ENCODE measurements at regions of chr2 and their contacts with region 1.

Region 1: DNA sequence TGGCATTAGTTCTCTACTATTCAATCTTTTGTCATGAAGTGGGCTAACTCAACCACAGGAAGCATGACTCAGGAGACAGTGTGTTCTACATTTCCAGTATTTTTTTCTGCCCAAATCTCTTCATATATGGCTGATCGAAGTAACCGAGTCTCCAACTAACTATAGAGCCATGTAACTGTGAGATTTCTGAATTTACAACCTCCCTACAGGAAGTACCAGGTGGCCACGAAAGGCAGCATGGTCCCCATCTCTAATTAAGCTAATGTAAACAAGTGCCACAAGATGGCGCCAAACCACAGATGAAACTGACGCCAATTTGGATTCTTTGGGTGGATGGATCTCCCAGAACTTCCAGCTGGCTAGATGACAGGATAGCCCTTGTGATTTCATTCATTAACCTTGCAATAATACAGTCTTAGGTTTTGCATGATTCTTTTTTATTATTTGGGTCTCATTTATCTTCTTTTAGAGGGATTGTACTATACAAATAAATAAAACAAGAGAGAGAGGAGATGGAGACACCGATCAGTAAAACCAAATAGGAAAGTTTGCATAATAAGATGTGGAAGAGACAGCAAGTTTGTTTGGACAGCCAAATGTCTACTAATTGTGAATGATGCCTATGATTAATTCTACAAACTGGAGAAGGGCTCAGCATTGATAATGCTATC is 18.3 kb upstream of the ARHGAP15 start:
- DNase-seq: peak; percentile 59 to 72 (median 67)
- H3K4me3 ChIP-seq: no peak overlapping the region
- H3K4me3 Mint-ChIP-seq: peak overlapping the region in 5 of 8 donors; percentile 17 to 53 (median 42)
- H3K27ac ChIP-seq: peak overlapping the region; percentile 33
- H3K27ac Mint-ChIP-seq: peak overlapping the region in 6 of 7 donors; percentile 63 to 89 (median 74)
- H3K4me1 ChIP-seq: peaks cover 20% of the 10 kb centered on the region
- H3K4me1 Mint-ChIP-seq: peaks cover 17 to 25% (median 21%) of the 10 kb centered on the region in 4 donors
- H3K27me3 ChIP-seq: no peaks in the 10 kb centered on the region
- H3K27me3 Mint-ChIP-seq: no peaks in the 10 kb centered on the region

Region 2: DNA sequence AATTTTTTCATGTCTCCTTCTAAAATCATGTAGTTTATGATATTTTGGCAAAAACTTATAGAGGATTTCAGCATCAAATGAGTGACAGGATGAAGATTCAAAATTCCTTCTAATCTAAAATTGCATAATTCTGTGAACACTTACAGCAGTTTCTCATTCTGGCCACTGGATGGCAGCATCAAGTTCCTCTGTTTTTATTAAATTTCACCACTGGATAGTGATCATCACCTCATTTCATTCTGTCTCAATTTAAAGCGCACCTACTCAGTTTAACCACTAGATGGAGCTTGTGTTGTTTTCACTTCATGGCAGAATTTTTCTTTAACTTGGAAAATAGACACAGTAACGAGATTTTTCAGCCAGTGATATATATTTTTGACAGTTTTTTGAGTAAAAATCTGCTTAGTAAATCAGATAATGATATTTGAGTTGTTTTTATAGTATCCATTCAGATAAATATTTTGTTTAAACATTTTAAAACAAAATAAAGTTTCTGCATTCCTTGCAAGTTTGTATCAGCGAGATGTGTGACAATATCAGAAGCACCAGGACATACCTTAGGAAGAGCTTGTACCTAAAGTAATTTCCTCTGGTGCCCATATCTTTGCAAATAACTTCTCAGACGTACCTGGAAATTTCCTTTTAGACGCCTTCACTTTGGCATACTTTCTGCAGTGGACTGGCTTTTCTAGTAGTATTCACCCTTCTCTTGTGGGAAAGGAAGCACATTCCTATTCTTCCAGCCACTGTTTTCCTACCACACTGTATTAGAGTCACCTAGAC is 76.4 kb before region 1 on chr2:
- CTCF ChIA-PET with region 1: interaction called, 6 read pairs
- POLR2A ChIA-PET with region 1: no interaction called
- intact Hi-C with region 1: loop called (anchors 1 kb)
- DNase-seq: peak; percentile 58 to 83 (median 77)
- H3K4me3 ChIP-seq: no peak overlapping the region
- H3K4me3 Mint-ChIP-seq: no peak overlapping the region
- H3K27ac ChIP-seq: no peak overlapping the region
- H3K27ac Mint-ChIP-seq: no peak overlapping the region
- H3K4me1 ChIP-seq: no peaks in the 10 kb centered on the region
- H3K4me1 Mint-ChIP-seq: peaks cover 0 to 4% (median under 1%) of the 10 kb centered on the region in 4 donors
- H3K27me3 ChIP-seq: no peaks in the 10 kb centered on the region
- H3K27me3 Mint-ChIP-seq: peaks cover 0 to 4% of the 10 kb centered on the region in 2 donors

Region 3: DNA sequence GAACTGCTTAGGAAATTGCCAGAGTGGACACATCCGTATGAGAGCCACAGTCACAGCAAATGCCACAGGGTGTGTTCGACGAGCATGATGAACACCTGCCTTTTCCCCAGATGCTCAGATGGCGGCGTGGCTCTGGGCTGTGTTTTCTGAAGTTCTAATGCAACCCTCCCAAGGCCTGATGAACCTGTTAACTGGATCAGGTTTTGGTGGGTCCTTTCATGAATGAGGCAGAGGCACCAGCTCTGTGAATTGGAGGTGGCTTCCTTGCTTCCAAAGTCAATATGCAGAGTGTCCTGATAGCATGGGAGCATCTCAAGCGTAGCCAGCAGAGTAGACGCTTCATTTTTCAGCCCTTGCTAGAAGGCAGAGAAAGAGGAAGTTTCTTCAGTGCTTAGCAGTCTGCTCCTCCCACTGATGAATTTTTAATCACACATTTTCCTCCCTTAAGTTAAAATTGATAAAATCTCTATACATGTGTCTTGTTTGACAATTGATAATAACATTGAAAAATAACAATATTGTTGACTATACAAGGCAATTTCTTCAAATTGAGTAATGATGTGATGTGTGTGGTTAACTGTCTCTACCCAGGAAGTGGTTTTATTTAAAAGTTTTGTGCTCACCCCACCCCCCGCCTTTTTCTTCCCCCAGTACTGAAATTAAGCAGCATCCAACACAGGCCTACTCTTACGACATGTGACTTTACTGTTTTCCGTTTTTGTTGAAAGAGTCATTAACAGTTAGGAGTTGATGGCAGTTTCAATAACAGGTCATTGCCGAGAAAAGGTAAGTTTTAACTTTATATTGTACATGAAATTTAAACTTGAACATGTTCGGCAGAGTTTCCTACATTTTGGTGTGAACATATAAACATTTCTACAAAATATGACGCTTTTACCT is 18.0 kb after region 1 on chr2 and contains the start of gene ARHGAP15:
- CTCF ChIA-PET with region 1: interaction called, 49 read pairs
- POLR2A ChIA-PET with region 1: interaction called, 63 read pairs
- intact Hi-C with region 1: loop called (anchors 1 kb)
- DNase-seq: peak; percentile 80 to 90 (median 84)
- H3K4me3 ChIP-seq: peak within 1 kb of the TSS; percentile 64 to 87
- H3K4me3 Mint-ChIP-seq: peak within 1 kb of the TSS; percentile 79 to 92 (median 89)
- H3K27ac ChIP-seq: peak within 1 kb of the TSS; percentile 70
- H3K27ac Mint-ChIP-seq: peak within 1 kb of the TSS; percentile 73 to 98 (median 96)
- H3K4me1 ChIP-seq: peaks cover 76% of the 10 kb centered on the region
- H3K4me1 Mint-ChIP-seq: peaks cover 31 to 42% (median 34%) of the 10 kb centered on the region in 4 donors
- H3K27me3 ChIP-seq: no peaks in the 10 kb centered on the region
- H3K27me3 Mint-ChIP-seq: no peaks in the 10 kb centered on the region
- total RNA-seq, gene ARHGAP15: 218 to 225 TPM

Region 4: DNA sequence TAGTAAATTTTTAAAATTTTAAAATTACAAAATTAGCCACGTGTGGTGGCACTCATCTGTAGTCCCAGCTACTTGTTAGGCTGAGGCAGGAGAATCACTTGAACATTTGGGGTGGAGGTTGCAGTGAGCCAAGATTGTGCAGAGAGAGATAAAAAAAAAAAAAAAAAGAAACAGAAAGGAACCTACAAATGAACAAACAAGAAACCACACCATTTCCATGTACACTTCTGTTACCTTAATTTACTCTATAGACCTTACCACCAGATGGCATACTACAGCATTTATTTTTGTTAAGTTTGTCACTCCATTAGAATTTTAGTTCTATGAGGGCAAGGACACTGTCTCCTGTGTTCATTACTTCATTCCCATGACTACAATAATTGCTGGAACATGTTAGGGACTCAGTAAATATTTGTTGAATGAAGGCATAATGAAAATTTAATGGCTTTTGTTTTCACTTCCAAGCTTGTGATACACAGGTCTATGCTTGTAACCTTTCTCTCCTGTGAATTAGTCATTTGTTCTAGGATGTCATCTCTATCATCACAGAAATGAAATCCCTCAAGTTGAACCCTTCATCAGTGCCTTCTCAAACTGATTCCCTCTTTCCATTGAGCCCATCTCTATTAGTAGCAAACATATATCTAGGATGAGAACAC is 94.3 kb after region 1 on chr2:
- CTCF ChIA-PET with region 1: interaction called, 6 read pairs
- POLR2A ChIA-PET with region 1: interaction called, 4 read pairs
- intact Hi-C with region 1: loop called (anchors 5 kb)
- DNase-seq: peak in 4 of 5 donors; percentile 54 to 60 (median 57)
- H3K4me3 ChIP-seq: no peak overlapping the region
- H3K4me3 Mint-ChIP-seq: peak overlapping the region in 4 of 8 donors; percentile 16 to 64 (median 34)
- H3K27ac ChIP-seq: no peak overlapping the region
- H3K27ac Mint-ChIP-seq: peak overlapping the region in 5 of 7 donors; percentile 39 to 77 (median 67)
- H3K4me1 ChIP-seq: peaks cover 42% of the 10 kb centered on the region
- H3K4me1 Mint-ChIP-seq: peaks cover 55 to 66% (median 57%) of the 10 kb centered on the region in 4 donors
- H3K27me3 ChIP-seq: no peaks in the 10 kb centered on the region
- H3K27me3 Mint-ChIP-seq: no peaks in the 10 kb centered on the region

Region 5: DNA sequence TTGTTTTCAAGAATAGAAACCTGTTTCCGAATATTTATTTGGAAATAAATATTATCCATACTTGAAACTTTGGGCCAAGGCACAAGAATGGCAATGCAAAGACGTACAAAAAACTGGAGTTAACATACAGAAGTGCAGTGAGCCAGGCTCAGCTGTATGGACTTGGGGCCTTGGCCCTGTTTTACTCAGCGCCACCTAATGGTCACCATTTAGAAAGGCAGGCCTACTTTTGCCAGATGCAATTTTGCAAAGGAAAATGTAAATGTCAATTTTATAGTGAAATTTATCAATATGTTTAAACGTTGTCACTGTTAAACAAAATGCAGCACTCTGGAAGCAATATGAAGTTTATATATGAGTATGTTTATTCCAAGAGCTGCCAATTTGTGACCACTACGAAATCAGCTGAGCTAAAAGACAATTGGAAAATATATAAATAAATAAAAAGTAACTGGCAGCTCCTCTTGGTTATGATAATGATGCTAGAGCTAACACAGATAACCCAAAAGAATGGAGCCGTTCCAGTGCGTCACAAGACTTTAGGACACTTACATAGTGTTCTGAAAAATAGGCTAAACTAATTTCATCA is 173.3 kb after region 1 on chr2:
- CTCF ChIA-PET with region 1: interaction called, 36 read pairs
- POLR2A ChIA-PET with region 1: interaction called, 5 read pairs
- intact Hi-C with region 1: loop called (anchors 1 kb)
- DNase-seq: peak; percentile 31 to 46 (median 35)
- H3K4me3 ChIP-seq: no peak overlapping the region
- H3K4me3 Mint-ChIP-seq: peak overlapping the region in 1 of 8 donors; percentile 32
- H3K27ac ChIP-seq: no peak overlapping the region
- H3K27ac Mint-ChIP-seq: peak overlapping the region; percentile 18 to 83 (median 53)
- H3K4me1 ChIP-seq: peaks cover 26% of the 10 kb centered on the region
- H3K4me1 Mint-ChIP-seq: peaks cover 42 to 82% (median 57%) of the 10 kb centered on the region in 4 donors
- H3K27me3 ChIP-seq: no peaks in the 10 kb centered on the region
- H3K27me3 Mint-ChIP-seq: no peaks in the 10 kb centered on the region